ENCODE measurements at regions of chr5 and their contacts with region 1.

Region 1: GRCh38 chr5:76790632-76791290 is 28.1 kb upstream of the F2RL1 start:
- DNase-seq: peak; percentile 76 to 94
- ATAC-seq: peak; percentile 81 to 82
- H3K4me3 ChIP-seq: no peak overlapping the region
- H3K27ac ChIP-seq: peak overlapping the region; percentile 82 to 87
- H3K4me1 ChIP-seq: peaks cover 76% of the 10 kb centered on the region
- CTCF ChIP-seq: no peak
- EP300 ChIP-seq: peak; percentile 83; a peak in 2 of 5 replicates
- POLR2A ChIP-seq: no peak
- RAD21 ChIP-seq: peak; percentile 7 to 38; a peak in 3 of 5 replicates

Region 2: DNA sequence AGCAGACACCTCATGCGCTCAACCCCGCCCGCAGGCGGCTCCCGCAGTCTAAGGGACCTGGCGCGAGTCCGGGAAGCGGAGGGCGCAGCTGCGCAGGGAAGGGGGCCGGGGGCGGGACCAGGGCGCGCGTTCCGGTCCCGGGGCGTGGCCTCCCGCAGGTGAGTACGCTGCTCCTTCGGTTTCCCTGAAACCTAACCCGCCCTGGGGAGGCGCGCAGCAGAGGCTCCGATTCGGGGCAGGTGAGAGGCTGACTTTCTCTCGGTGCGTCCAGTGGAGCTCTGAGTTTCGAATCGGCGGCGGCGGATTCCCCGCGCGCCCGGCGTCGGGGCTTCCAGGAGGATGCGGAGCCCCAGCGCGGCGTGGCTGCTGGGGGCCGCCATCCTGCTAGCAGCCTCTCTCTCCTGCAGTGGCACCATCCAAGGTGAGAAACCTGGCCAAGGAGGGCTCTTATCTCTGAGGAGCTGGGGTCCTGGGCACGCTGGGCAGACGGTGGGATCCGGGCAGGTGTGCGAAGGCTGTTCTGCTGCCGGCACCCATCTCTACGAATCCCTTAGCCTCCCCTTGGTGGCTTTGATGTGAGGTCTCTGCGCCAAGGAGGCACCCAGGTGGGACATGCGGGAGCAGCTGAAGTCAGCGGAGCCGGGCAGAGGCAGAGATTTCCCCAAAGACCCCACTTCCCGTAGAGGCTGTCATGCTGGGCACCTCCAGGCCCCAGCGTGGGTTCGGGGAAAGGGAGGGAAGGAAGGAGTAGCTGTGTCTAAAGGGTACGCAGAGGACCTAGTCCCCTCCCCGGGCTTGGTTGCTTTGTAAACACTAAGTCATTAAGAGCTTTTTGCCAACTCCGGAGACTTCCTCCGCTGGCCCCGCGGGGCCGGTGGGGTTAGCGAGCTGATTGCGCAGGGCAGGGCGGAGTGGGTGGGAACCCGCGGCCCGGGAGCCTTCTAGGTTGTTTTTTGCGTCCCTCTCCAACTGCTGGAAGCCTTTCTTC is 28.4 kb after region 1 on chr5 and contains the start of gene F2RL1:
- CTCF ChIA-PET with region 1: interaction called, 7 read pairs
- POLR2A ChIA-PET with region 1: interaction called, 19 read pairs
- DNase-seq: peak; percentile 88 to 91
- ATAC-seq: peak; percentile 78 to 81
- H3K4me3 ChIP-seq: peak within 1 kb of the TSS; percentile 88
- H3K27ac ChIP-seq: peak within 1 kb of the TSS; percentile 83 to 94
- H3K4me1 ChIP-seq: peaks cover 74% of the 10 kb centered on the region
- CTCF ChIP-seq: no peak
- EP300 ChIP-seq: 0 out of 5 replicates have a peak, but pooled peaks of 1 of the 2 experiments have one; percentile 10
- POLR2A ChIP-seq: peak; percentile 47
- RAD21 ChIP-seq: peak; percentile 17 to 31; a peak in 1 of 5 replicates
- polyA plus RNA-seq, gene F2RL1: 226 and 328 TPM in 2 replicates

Region 3: DNA sequence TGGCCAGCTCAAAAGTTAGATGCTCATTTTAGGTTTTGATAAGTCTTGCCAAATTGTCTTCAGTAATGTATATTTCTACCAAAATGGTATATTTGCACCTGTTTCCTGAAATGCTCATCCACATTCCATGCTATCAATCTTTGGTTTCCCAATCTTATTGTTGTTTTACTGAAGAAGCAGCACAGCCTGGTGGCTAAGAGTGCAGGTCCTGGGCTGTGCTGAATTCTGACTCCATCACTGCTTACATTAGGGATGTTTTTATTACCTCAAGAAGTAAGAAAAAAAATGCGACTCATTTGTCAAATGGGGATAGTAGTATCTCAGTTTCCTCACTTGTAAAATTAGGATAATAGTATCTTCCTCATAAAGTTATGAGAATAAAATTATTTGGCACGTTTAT is 45.4 kb after region 1 on chr5:
- CTCF ChIA-PET with region 1: no interaction called
- POLR2A ChIA-PET with region 1: no interaction called
- DNase-seq: no peak
- ATAC-seq: peak in 1 of 2 experiments; percentile 14; a peak in 1 of 6 replicates
- H3K4me3 ChIP-seq: no peak overlapping the region
- H3K27ac ChIP-seq: peak overlapping the region in 1 of 2 experiments; percentile 22; a peak in 1 of 6 replicates
- H3K4me1 ChIP-seq: peaks cover 35% of the 10 kb centered on the region
- CTCF ChIP-seq: peak; percentile 19; the same call in 1 of the 3 replicates
- EP300 ChIP-seq: no peak
- POLR2A ChIP-seq: no peak
- RAD21 ChIP-seq: peak; percentile 46 to 56

Measured in A549 (cell line).